Psoas muscle (tissue), 8 donors: ENCODE measurements at regions of chr3 and their contacts with region 1.

Region 1: DNA sequence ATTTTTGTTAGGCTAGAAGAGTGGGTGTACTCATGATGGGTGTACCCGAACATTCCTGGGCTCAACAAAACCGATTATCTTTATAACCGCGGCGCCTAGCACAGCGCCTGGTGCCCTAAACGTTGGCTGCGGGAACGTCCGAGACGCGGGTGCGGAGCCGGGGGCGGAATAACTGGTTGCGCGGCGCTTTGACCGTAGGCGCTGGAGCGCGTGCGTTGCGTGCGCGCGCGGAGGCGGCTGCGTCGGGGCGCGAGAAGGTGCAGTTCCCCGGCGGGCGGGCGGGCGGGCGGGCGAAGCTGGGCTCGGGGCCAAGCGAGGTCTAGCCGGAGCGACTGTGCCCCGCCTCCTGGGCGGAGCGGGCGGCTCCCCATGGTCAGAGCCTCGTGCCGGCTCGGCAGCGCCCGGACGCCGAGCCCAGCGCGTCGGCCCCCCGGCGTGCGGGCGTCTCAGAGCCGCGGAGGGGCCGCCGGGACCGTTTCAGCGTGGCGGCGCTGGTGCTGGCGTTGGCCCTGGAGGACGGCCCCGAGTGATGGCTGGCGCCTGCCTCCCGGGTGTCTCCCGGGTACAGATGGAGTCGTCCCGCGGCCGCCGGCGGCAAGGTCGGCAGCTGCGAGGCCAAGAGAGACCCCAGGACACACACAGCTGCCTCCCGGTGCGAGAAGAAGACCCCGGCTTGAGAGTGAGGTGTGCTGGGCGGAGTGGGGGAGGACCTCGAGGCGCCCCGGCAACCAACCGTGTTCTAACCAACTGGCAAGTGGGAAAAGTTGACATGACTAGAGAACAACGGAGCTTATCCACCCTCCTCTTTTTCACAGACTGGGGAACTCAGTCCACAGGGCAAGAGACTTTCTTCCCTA is at the start of gene PLAAT1:
- DNase-seq: peak; percentile 80 to 90
- ATAC-seq: peak; percentile 90 to 94 (median 91)
- H3K4me3 ChIP-seq: peak within 1 kb of the TSS; percentile 70
- H3K27ac ChIP-seq: peak within 1 kb of the TSS; percentile 93
- H3K4me1 ChIP-seq: peaks cover 22% of the 10 kb centered on the region
- H3K27me3 ChIP-seq: no peaks in the 10 kb centered on the region
- CTCF ChIP-seq: no peak
- total RNA-seq, gene PLAAT1: 14.6 to 26.2 (median 21.8) TPM

Region 2: DNA sequence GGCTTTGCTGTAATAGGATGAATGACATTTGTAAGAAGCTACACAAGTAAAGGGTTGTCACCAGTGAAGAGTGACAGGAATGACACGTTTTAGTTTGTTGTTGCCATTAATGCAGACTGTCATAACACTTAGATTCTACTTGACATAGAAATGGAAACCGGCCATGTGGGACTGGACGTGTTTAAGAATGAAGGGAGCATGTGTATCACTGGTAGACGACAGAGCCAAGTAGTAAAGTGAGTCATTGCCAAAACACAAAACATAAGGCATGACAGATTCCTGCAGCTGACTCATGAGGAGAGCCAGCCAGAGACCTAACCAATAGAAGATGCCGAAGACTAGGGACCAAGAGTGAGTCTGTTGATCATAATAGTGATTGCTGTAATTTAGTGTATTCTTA is 106.2 kb before region 1 on chr3:
- intact Hi-C with region 1: loop called in 1 of 2 experiments (anchors 5 kb)
- DNase-seq: peak in 1 of 2 donors; percentile 12
- ATAC-seq: peak; percentile 95 to 100 (median 98)
- H3K4me3 ChIP-seq: no peak overlapping the region
- H3K27ac ChIP-seq: no peak overlapping the region
- H3K4me1 ChIP-seq: peaks cover 15% of the 10 kb centered on the region
- H3K27me3 ChIP-seq: no peaks in the 10 kb centered on the region
- CTCF ChIP-seq: no peak

Region 3: DNA sequence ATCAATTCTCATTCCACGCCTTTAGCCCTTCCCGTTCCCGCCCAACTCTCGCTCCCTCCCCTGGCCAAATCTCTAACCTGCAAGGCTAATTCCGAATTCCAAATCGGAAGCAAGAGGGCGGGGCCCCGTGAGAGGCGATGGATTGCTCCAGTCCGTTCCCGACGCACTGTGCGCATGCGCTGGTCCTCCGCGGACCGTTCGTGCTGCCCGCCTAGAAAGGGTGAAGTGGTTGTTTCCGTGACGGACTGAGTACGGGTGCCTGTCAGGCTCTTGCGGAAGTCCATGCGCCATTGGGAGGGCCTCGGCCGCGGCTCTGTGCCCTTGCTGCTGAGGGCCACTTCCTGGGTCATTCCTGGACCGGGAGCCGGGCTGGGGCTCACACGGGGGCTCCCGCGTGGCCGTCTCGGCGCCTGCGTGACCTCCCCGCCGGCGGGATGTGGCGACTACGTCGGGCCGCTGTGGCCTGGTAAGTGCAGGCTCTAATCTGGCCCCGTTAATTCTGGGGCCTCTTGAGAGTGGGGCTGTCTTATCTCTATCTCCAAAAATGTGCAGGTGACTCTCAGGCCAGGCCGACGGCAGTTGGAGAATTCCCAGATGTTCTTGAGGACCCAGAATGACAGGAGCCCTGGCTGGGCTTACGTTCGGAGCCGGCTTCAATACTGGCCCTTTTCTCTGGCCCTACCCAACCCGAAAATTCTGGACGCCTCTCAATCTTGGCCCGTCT is 352.0 kb after region 1 on chr3 and contains the start of gene OPA1:
- intact Hi-C with region 1: loop called in 1 of 2 experiments (anchors 10 kb)
- DNase-seq: peak; percentile 99
- ATAC-seq: peak; percentile 98 to 99 (median 98)
- H3K4me3 ChIP-seq: peak within 1 kb of the TSS; percentile 94
- H3K27ac ChIP-seq: peak within 1 kb of the TSS; percentile 92
- H3K4me1 ChIP-seq: peaks cover 23% of the 10 kb centered on the region
- H3K27me3 ChIP-seq: no peaks in the 10 kb centered on the region
- CTCF ChIP-seq: peak; percentile 38
- total RNA-seq, gene OPA1: 73.4 to 129 (median 82.2) TPM